B cell (primary cell): ENCODE measurements at regions of chr16 and their contacts with region 1.

Region 1: GRCh38 chr16:25155553-25156460 is 44.3 kb downstream of the LCMT1 start:
- DNase-seq: no peak
- ATAC-seq: no peak
- H3K4me3 ChIP-seq: no peak overlapping the region
- H3K4me3 Mint-ChIP-seq: no peak overlapping the region
- H3K27ac ChIP-seq: no peak overlapping the region
- H3K27ac Mint-ChIP-seq: peak overlapping the region; percentile 5
- H3K4me1 ChIP-seq: peaks cover 0 to 7% of the 10 kb centered on the region in 2 donors
- H3K4me1 Mint-ChIP-seq: peaks cover 7% of the 10 kb centered on the region
- H3K27me3 ChIP-seq: no peaks in the 10 kb centered on the region
- H3K27me3 Mint-ChIP-seq: no peaks in the 10 kb centered on the region
- CTCF ChIP-seq: no peak

Region 2: GRCh38 chr16:23739516-23739915 is 1416.3 kb before region 1 on chr16:
- CTCF ChIA-PET with region 1: no interaction called
- POLR2A ChIA-PET with region 1: interaction called, 10 read pairs
- intact Hi-C with region 1: no loop called
- DNase-seq: no peak
- ATAC-seq: no peak
- H3K4me3 ChIP-seq: no peak overlapping the region
- H3K4me3 Mint-ChIP-seq: no peak overlapping the region
- H3K27ac ChIP-seq: no peak overlapping the region
- H3K27ac Mint-ChIP-seq: no peak overlapping the region
- H3K4me1 ChIP-seq: peaks cover 3 to 5% of the 10 kb centered on the region in 2 donors
- H3K4me1 Mint-ChIP-seq: peaks cover 7% of the 10 kb centered on the region
- H3K27me3 ChIP-seq: peaks cover 0 to 9% (median 1%) of the 10 kb centered on the region in 4 experiments
- H3K27me3 Mint-ChIP-seq: peaks cover 20% of the 10 kb centered on the region
- CTCF ChIP-seq: no peak